Activated CD4-positive, alpha-beta T cell treated with anti-CD3 and anti-CD28 coated beads for 36 hours (primary cell): ENCODE measurements at regions of chr18 and their contacts with region 1.

Region 1: DNA sequence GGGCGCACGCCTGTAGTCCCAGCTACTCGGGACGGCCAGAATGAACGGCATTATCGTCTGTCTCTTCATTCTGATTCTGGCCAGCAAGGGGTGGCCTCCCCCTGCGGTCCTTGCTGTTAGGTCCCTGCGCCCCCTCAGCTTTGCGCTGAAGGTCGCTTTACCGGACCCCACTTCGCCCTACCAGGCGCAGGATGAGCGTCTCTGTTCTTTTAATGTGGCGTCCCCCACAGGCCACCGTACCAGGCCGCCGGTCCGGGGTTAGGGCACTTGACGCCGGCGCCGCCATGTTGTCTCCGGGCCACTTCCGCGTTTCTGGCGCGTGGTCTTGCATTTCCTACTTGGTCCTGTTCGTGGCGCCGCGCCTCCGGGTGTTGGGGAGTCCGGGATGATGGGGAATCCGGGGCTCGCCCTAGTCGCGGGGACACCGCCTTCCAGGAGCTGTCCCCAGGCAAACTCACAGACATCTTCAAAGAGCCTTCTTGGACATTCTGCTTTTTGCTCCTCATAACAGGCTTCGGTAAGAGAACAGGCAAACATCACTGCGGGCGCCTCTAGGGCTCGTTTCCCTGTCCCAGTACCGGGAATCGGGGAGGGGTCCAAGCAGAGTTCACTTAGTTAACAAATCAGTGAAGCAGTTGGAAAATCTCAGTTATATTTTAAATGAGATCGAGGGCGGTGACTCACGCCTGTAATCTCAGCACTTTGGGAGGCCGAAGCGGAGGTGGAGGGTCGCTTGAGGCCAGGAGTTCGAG is 8.5 kb upstream of the NARS1 start:
- DNase-seq: peak; percentile 97
- ATAC-seq: peak; percentile 99
- H3K4me3 Mint-ChIP-seq: peak overlapping the region; percentile 97
- H3K27ac Mint-ChIP-seq: peak overlapping the region; percentile 96
- H3K4me1 Mint-ChIP-seq: peaks cover 11% of the 10 kb centered on the region
- H3K27me3 Mint-ChIP-seq: no peaks in the 10 kb centered on the region

Region 2: GRCh38 chr18:56638271-56639093 is 991.7 kb before region 1 on chr18 and contains the start of gene TXNL1:
- CTCF ChIA-PET with region 1: no interaction called
- POLR2A ChIA-PET with region 1: no interaction called
- intact Hi-C with region 1: loop called in 1 of 2 experiments (anchors 1 kb)
- DNase-seq: peak; percentile 100
- ATAC-seq: peak; percentile 98
- H3K4me3 Mint-ChIP-seq: peak within 1 kb of the TSS; percentile 98
- H3K27ac Mint-ChIP-seq: peak within 1 kb of the TSS; percentile 96
- H3K4me1 Mint-ChIP-seq: peaks cover 41% of the 10 kb centered on the region
- H3K27me3 Mint-ChIP-seq: no peaks in the 10 kb centered on the region
- total RNA-seq, gene TXNL1: 75.3 to 87.0 TPM

Region 3: GRCh38 chr18:57586251-57587049 is 43.7 kb before region 1 on chr18 and contains the start of gene FECH:
- CTCF ChIA-PET with region 1: no interaction called
- POLR2A ChIA-PET with region 1: no interaction called
- intact Hi-C with region 1: loop called in 1 of 2 experiments (anchors 2 kb)
- DNase-seq: peak; percentile 76
- ATAC-seq: peak; percentile 92
- H3K4me3 Mint-ChIP-seq: peak within 1 kb of the TSS; percentile 80
- H3K27ac Mint-ChIP-seq: peak within 1 kb of the TSS; percentile 74
- H3K4me1 Mint-ChIP-seq: peaks cover 21% of the 10 kb centered on the region
- H3K27me3 Mint-ChIP-seq: no peaks in the 10 kb centered on the region
- total RNA-seq, gene FECH: 23.3 to 28.8 TPM

Region 4: DNA sequence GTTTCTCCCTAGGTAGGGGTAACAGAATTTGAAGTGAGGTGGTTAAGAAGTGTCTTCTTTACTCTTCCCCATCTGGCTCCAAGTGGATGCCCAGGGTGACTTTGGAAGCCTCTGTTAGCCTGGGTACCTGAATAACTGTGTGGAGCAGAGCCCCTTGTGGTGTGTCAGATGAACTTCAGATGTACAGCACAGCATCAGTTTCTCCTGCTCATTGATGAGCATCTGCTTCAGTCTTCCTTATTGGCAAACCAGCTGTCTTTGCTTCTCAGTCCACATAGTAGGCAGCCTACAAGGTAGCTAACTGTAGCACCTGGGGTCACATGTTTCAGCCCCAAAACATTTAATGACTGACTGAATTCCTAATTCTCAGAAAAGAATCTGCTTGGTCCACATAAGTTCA is 229.1 kb after region 1 on chr18:
- CTCF ChIA-PET with region 1: no interaction called
- POLR2A ChIA-PET with region 1: no interaction called
- intact Hi-C with region 1: loop called in 1 of 2 experiments (anchors 2 kb)
- DNase-seq: peak; percentile 29
- ATAC-seq: peak; percentile 71
- H3K4me3 Mint-ChIP-seq: no peak overlapping the region
- H3K27ac Mint-ChIP-seq: no peak overlapping the region
- H3K4me1 Mint-ChIP-seq: no peaks in the 10 kb centered on the region
- H3K27me3 Mint-ChIP-seq: peaks cover 8% of the 10 kb centered on the region

Region 5: GRCh38 chr18:58223717-58224424 is 593.7 kb after region 1 on chr18:
- CTCF ChIA-PET with region 1: no interaction called
- POLR2A ChIA-PET with region 1: no interaction called
- intact Hi-C with region 1: no loop called
- DNase-seq: no peak
- ATAC-seq: no peak
- H3K4me3 Mint-ChIP-seq: no peak overlapping the region
- H3K27ac Mint-ChIP-seq: no peak overlapping the region
- H3K4me1 Mint-ChIP-seq: peaks cover 6% of the 10 kb centered on the region
- H3K27me3 Mint-ChIP-seq: peaks cover 6% of the 10 kb centered on the region